ENCODE measurements at regions of chr7 and their contacts with region 1.

Region 1: GRCh38 chr7:138625849-138626230 is 75.3 kb downstream of the SVOPL start:
- DNase-seq: peak; percentile 28
- H3K4me3 Mint-ChIP-seq: peak overlapping the region; percentile 47
- H3K27ac Mint-ChIP-seq: peak overlapping the region; percentile 73
- H3K4me1 Mint-ChIP-seq: peaks cover 47% of the 10 kb centered on the region
- H3K27me3 Mint-ChIP-seq: peaks cover 15% of the 10 kb centered on the region

Region 2: DNA sequence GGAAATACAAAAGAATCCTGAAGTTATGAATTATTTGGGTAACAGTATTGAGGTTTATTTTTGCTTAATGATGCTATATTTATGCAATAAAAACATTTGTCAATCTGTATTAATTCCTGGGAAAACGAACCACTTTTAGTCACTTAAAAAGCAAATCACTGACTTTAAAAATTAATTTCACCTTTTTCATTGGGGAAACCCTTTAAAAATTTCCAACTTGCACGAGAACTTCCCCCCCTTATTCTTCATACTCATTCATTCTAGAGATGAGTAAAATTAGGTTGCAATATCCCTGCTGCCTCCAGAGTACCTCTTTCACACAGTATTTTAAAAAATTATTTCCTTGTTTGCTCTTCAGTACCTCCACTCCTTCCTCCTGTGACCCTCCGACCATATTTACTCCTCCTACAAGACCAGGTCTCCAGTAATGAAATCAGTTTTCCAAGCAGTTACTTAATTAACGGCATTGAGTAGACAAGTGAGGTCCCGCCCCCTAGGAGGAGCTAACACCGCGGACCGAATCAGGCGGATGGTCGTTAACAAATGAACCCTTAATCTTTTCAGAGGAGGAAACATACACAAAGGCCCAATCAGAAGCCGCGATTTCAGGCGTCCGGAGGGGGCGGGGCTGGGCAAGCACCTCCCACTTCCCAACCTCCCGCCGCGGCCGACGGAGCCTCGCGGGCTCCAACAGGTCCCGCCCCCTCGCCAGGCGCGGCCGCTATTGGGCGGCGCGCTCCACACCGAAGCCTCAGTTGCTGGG is 166.2 kb before region 1 on chr7:
- intact Hi-C with region 1: loop called (anchors 5 kb)
- DNase-seq: peak; percentile 97
- H3K4me3 Mint-ChIP-seq: peak overlapping the region; percentile 74
- H3K27ac Mint-ChIP-seq: peak overlapping the region; percentile 21
- H3K4me1 Mint-ChIP-seq: peaks cover 24% of the 10 kb centered on the region
- H3K27me3 Mint-ChIP-seq: peaks cover 3% of the 10 kb centered on the region

Region 3: GRCh38 chr7:138603549-138604318 is 22.1 kb before region 1 on chr7:
- intact Hi-C with region 1: loop called (anchors 2 kb)
- DNase-seq: no peak
- H3K4me3 Mint-ChIP-seq: no peak overlapping the region
- H3K27ac Mint-ChIP-seq: no peak overlapping the region
- H3K4me1 Mint-ChIP-seq: peaks cover 17% of the 10 kb centered on the region
- H3K27me3 Mint-ChIP-seq: peaks cover 3% of the 10 kb centered on the region

Region 4: GRCh38 chr7:138645290-138645689 is 19.4 kb after region 1 on chr7:
- intact Hi-C with region 1: no loop called
- DNase-seq: no peak
- H3K4me3 Mint-ChIP-seq: no peak overlapping the region
- H3K27ac Mint-ChIP-seq: no peak overlapping the region
- H3K4me1 Mint-ChIP-seq: no peaks in the 10 kb centered on the region
- H3K27me3 Mint-ChIP-seq: no peaks in the 10 kb centered on the region

Region 5: GRCh38 chr7:138814806-138815332 is 189.0 kb after region 1 on chr7:
- intact Hi-C with region 1: loop called (anchors 5 kb)
- DNase-seq: no peak
- H3K4me3 Mint-ChIP-seq: no peak overlapping the region
- H3K27ac Mint-ChIP-seq: peak overlapping the region; percentile 1
- H3K4me1 Mint-ChIP-seq: peaks cover 28% of the 10 kb centered on the region
- H3K27me3 Mint-ChIP-seq: peaks cover 2% of the 10 kb centered on the region